ENCODE measurements at regions of chr16 and their contacts with region 1.

Region 1: DNA sequence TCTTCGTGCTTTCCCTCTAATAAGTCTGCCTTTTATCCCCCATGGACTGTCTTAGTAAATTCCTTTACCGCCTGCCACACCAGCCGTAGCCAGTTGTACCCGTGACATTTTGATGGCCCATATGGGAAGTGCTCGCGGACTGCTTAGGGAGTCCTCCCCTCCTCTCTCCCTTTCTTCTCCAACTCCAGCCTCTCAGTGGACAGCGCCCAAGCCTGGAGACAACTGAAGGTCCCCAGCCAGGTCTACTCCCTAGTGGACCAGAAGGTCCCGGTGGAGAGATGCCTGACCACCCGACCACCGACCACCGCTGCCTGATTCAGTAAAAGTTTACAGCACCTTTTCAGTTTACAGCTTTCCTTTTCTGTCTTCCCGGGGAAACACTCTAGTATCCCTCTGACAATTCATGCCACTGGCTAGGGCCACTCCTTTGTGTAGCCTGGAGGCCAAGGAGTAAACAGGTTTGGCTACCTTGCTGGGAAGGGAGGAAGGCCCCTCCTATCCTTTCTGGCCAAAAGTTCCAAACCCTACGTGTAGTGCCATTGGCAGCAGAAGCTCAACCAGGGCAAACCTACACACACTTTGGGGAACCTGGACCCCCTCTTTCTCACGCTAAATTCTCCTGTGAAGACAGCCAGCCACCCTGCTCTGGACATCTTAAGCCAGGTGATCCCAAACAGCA is 18.0 kb downstream of the CTRB2 start:
- DNase-seq: no peak
- ATAC-seq: no peak
- H3K4me3 Mint-ChIP-seq: no peak overlapping the region
- H3K27ac Mint-ChIP-seq: no peak overlapping the region
- H3K4me1 Mint-ChIP-seq: no peaks in the 10 kb centered on the region
- H3K27me3 Mint-ChIP-seq: no peaks in the 10 kb centered on the region; the same call in 1 of the 2 replicates
- CTCF ChIP-seq: no peak

Region 2: DNA sequence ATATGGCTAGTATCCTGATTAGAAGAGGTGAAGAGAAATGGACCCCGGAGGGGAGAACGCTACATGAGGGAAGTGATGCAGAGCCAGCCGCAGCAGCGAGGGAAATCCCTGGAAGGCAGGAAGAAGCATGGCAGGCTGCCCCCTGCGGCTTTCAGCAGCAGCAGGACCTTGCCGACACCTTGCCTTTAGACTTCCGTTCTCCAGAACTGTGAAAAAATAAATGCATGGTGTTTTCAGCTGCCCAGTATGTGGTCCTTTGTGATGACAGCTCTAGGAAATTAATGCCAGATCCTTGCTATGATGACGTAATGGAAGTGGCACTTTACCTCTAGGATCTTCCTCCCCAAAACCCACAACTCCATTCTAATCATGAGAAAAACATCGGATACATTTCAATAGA is 50.3 kb before region 1 on chr16:
- CTCF ChIA-PET with region 1: no interaction called
- POLR2A ChIA-PET with region 1: interaction called, 10 read pairs
- DNase-seq: peak; percentile 26
- ATAC-seq: peak; percentile 53; the same call in 1 of the 2 replicates
- H3K4me3 Mint-ChIP-seq: no peak overlapping the region
- H3K27ac Mint-ChIP-seq: no peak overlapping the region
- H3K4me1 Mint-ChIP-seq: peaks cover 9% of the 10 kb centered on the region
- H3K27me3 Mint-ChIP-seq: no peaks in the 10 kb centered on the region
- CTCF ChIP-seq: no peak

Region 3: DNA sequence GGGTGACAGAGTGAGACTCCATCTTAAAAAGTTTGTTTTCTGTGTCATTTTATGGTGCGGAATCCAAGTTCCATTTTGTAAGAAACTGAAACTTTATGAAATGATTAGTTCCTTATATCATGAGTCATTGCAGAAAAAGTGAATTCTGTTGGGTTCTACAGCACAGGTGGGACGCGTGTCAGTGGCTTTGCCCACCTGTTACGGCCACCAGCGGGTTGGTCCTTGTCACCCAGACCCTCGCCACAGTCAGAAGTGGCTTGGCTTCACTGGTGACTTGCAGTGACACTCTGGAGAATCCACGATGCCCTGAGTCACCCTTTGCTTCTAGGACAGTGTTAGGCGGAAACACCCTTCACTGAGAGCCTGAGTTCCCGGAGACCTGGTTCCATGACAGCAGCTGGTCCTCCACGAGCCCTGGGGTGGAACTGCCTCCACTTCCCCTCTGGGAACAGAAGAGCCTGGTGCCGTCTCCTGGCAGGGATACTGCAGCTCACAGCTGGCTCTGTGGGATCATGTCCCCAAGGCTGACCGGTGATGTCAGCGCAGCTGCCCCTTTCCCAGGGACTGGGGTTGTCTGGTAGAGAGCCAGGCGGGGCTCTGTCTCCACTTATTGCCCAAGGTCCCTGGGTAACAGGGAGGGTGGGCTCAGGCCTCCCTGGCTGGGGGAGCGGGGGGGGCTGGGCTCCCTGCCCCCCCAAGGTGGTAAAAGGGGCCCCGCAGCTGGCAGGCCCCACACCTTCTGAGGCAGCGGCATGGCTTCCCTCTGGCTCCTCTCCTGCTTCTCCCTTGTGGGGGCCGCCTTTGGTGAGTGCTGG is 29.5 kb after region 1 on chr16 and contains the start of gene CTRB1:
- CTCF ChIA-PET with region 1: no interaction called
- POLR2A ChIA-PET with region 1: no interaction called
- DNase-seq: no peak
- ATAC-seq: no peak
- H3K4me3 Mint-ChIP-seq: no peak within 1 kb of the TSS
- H3K27ac Mint-ChIP-seq: no peak within 1 kb of the TSS
- H3K4me1 Mint-ChIP-seq: no peaks in the 10 kb centered on the region
- H3K27me3 Mint-ChIP-seq: no peaks in the 10 kb centered on the region
- CTCF ChIP-seq: no peak
- total RNA-seq, gene CTRB1: 3.9 to 5.7 TPM (median 5.7 TPM) in 3 replicates

Measured in WTC11 (cell line).